Activated CD4-positive, alpha-beta T cell treated with anti-CD3 and anti-CD28 coated beads, Interleukin-2, amount 10 ng/mL, durations not matched to agents 24 days and 14 days (primary cell): ENCODE measurements at regions of chr4 and their contacts with region 1.

Region 1: DNA sequence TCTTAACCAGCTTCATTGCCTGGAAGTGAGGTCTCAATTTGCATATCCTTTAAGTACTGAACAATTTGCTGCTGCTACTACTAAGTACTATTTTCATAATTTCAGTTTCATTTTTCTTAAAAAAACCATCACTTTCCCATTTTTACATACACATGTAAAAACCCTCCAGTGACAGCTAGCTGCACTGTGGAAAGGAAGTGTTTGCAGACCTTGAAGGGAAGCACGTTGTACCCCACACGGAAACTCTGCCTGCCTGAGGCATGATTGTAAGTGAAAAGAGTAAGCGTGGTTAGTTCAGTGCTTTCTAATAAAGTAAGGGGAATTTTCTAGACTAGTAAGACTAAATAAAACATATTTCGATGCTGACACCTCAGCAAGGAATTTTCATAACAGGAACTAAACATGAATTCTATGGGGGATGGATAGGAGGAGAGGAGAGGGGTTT is 103.6 kb downstream of the RAPGEF2 start:
- DNase-seq: peak; percentile 84
- H3K4me3 Mint-ChIP-seq: peak overlapping the region; percentile 70
- H3K27ac Mint-ChIP-seq: peak overlapping the region; percentile 71
- H3K4me1 Mint-ChIP-seq: peaks cover 45% of the 10 kb centered on the region
- H3K27me3 Mint-ChIP-seq: no peaks in the 10 kb centered on the region

Region 2: GRCh38 chr4:158671915-158672806 is 534.3 kb before region 1 on chr4 and contains the start of gene ETFDH:
- intact Hi-C with region 1: loop called (anchors 1 kb)
- DNase-seq: peak; percentile 99
- H3K4me3 Mint-ChIP-seq: peak within 1 kb of the TSS; percentile 99
- H3K27ac Mint-ChIP-seq: peak within 1 kb of the TSS; percentile 95
- H3K4me1 Mint-ChIP-seq: peaks cover 22% of the 10 kb centered on the region
- H3K27me3 Mint-ChIP-seq: peaks cover 1% of the 10 kb centered on the region
- total RNA-seq, gene ETFDH: 20.8 and 24.7 TPM in 2 replicates

Region 3: GRCh38 chr4:158768555-158769174 is 437.8 kb before region 1 on chr4 and contains the start of gene FNIP2:
- intact Hi-C with region 1: loop called (anchors 5 kb)
- DNase-seq: peak; percentile 94
- H3K4me3 Mint-ChIP-seq: peak within 1 kb of the TSS; percentile 100
- H3K27ac Mint-ChIP-seq: peak within 1 kb of the TSS; percentile 98
- H3K4me1 Mint-ChIP-seq: peaks cover 43% of the 10 kb centered on the region
- H3K27me3 Mint-ChIP-seq: no peaks in the 10 kb centered on the region
- total RNA-seq, gene FNIP2: 19.1 and 19.2 TPM in 2 replicates

Region 4: DNA sequence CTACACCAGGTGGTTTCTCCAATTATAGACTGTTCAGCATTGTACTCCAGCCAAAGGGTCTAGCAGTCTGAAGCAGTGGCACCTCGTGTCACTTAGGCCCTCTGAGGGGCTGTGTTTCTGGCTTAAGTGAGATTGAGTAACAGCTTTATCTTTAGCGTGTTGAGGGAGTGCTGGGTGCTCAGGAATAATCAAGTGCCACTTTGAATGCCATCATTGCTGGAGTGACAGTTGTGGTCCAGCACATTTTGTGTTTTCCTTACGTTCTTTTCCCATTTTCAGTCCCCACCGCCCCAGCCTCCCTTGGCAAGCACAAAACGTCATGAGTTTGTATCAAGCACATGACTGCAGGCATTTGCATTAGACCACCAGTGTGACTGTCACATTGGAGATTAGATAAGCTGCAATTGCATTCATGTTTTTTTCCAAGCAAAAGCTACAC is 378.9 kb before region 1 on chr4:
- intact Hi-C with region 1: no loop called
- DNase-seq: no peak
- H3K4me3 Mint-ChIP-seq: no peak overlapping the region
- H3K27ac Mint-ChIP-seq: no peak overlapping the region
- H3K4me1 Mint-ChIP-seq: peaks cover 55% of the 10 kb centered on the region
- H3K27me3 Mint-ChIP-seq: no peaks in the 10 kb centered on the region

Region 5: DNA sequence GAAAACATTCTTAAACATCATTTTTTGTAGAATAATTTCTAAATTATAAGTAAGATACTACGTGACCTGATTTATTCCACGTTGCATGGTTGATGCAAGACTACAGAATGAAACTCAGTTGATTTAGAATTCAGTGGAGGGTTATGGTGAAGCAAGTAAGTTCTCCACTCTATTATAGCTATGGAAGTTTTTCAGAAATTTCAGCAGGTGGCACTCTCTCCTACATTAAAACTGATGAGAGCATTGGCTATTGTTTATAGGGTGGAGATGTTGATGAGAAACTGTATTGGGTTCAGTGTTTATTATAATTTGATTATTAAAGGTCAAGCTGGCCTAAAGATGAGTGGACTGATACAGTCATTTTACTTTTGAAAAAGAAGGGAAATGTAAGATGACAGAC is 349.6 kb before region 1 on chr4:
- intact Hi-C with region 1: loop called (anchors 1 kb)
- DNase-seq: peak; percentile 63
- H3K4me3 Mint-ChIP-seq: no peak overlapping the region
- H3K27ac Mint-ChIP-seq: no peak overlapping the region
- H3K4me1 Mint-ChIP-seq: peaks cover 6% of the 10 kb centered on the region
- H3K27me3 Mint-ChIP-seq: no peaks in the 10 kb centered on the region

Region 6: DNA sequence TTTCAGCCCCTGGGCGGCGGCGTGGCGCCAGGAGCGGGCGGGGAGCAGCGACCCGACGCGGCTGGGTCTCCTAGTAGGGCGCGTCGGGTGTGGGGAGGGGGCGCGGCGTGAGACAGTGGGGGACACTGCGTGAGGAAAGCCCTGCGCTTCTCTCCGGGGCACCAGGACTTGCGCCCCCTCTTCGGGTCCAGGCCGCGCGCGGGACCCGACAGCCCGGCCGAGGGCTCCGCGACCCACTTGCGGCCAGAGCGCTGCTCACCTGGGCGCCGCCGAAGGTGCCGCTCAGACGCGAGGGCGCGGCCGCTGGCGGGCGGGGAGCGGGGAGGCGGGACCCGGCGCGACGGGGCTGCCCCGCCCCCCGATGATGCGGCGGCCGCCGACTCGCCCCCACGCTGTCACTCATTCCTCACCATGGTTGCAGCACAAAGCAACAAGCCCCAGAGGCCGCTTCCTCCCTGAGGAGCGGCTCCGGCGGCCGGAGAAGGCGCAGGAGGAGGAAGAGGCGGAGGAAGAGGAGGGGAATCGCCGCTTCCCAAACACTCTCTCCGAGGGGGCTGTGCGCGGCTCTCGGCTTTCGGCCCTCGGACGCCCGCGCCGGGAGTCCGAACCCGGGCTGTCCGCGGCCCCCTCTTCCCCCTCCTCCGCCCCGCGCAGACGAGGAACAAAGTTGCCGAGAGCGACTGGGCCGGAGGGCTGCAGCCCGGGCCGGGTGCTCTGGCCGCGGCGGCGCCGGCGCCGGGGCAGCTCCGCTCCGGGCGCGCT is 103.6 kb before region 1 on chr4 and contains the start of gene RAPGEF2:
- intact Hi-C with region 1: loop called (anchors 2 kb)
- DNase-seq: peak; percentile 96
- H3K4me3 Mint-ChIP-seq: peak within 1 kb of the TSS; percentile 81
- H3K27ac Mint-ChIP-seq: peak within 1 kb of the TSS; percentile 87
- H3K4me1 Mint-ChIP-seq: peaks cover 42% of the 10 kb centered on the region
- H3K27me3 Mint-ChIP-seq: peaks cover 2% of the 10 kb centered on the region
- total RNA-seq, gene RAPGEF2: 27.1 and 32.0 TPM in 2 replicates

Region 7: GRCh38 chr4:159150821-159151390 is 55.5 kb before region 1 on chr4:
- intact Hi-C with region 1: no loop called
- DNase-seq: no peak
- H3K4me3 Mint-ChIP-seq: no peak overlapping the region
- H3K27ac Mint-ChIP-seq: no peak overlapping the region
- H3K4me1 Mint-ChIP-seq: peaks cover 11% of the 10 kb centered on the region
- H3K27me3 Mint-ChIP-seq: no peaks in the 10 kb centered on the region

Region 8: DNA sequence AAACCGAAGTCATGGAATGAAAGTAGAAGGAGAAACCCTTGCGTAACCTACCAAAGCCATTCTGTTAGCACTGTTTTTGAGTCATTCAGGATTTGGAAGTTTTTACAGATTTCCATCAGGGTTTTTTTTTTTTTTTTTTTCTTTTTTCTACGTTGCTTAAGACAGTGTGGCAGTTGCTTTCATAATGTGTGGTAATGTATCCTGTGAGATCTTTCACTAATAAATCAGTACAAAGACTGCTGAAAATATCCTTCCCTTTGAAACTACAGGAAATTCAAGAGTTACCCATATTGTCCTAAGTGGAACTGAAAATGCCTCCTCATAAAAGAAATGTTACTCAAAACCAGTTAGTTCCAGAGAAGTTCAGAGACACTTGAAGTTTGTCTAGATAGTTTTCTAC is 34.2 kb after region 1 on chr4:
- intact Hi-C with region 1: loop called (anchors 5 kb)
- DNase-seq: no peak
- H3K4me3 Mint-ChIP-seq: no peak overlapping the region
- H3K27ac Mint-ChIP-seq: peak overlapping the region; percentile 24
- H3K4me1 Mint-ChIP-seq: peaks cover 13% of the 10 kb centered on the region
- H3K27me3 Mint-ChIP-seq: no peaks in the 10 kb centered on the region